ENCODE measurements at regions of chr6 and their contacts with region 1.

Region 1: DNA sequence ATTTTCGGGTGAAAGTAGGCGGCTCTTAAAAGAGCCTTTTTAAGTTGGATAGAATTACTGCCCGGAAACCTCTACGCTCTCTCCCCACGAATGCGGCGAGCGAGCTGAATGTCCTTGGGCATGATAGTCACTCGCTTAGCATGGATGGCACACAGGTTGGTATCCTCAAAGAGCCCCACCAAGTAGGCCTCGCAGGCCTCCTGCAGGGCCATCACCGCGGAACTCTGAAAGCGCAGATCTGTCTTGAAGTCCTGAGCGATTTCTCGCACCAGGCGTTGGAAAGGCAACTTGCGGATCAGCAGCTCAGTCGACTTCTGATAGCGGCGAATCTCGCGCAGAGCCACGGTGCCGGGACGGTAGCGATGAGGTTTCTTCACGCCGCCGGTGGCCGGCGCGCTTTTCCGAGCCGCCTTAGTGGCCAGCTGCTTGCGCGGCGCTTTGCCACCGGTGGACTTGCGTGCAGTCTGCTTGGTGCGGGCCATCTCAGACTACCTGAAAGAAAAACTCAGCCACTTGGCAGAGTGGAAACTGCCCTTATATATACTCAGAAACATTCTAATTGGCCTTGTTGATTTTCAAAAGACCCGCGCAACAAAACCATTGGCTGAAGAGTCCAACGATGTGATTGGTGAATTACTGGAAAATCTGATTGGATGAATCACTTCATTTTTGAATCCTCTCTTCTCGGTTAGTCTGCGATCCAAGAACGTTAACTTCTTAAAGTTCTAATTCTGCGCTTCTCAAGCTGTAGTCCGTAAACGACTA is 93.9 kb upstream of the BTN3A2 start:
- DNase-seq: peak; percentile 91
- H3K4me3 Mint-ChIP-seq: no peak overlapping the region
- H3K27ac Mint-ChIP-seq: no peak overlapping the region
- H3K4me1 Mint-ChIP-seq: peaks cover 32% of the 10 kb centered on the region
- H3K27me3 Mint-ChIP-seq: no peaks in the 10 kb centered on the region

Region 2: DNA sequence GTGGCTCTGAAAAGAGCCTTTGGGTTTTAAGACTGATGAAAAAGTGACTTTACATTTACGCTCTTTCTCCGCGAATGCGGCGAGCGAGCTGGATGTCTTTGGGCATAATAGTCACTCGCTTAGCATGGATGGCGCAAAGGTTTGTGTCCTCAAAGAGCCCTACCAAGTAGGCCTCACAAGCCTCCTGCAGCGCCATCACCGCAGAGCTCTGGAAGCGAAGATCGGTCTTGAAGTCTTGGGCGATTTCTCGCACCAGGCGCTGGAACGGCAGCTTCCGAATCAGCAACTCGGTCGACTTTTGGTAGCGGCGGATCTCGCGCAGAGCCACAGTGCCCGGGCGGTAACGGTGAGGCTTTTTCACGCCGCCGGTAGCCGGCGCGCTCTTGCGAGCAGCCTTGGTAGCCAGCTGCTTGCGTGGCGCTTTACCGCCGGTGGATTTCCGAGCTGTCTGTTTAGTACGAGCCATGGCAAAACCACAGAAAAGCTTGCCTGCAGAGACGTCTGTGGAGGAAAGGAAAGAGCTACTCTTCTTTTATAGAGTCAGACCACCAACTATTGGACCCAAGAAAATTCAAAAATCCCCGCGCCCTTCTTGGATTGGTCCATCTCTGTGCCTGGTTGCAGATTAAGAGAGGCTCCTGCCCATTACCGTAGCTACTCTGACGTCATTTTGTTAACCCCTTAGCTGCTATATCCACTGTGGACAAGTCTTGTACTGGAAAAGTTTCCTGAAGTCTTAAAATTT is 239.3 kb before region 1 on chr6:
- CTCF ChIA-PET with region 1: no interaction called
- POLR2A ChIA-PET with region 1: interaction called, 12 read pairs
- DNase-seq: peak; percentile 96
- H3K4me3 Mint-ChIP-seq: peak overlapping the region; percentile 96
- H3K27ac Mint-ChIP-seq: peak overlapping the region; percentile 100
- H3K4me1 Mint-ChIP-seq: peaks cover 79% of the 10 kb centered on the region
- H3K27me3 Mint-ChIP-seq: peaks cover 3% of the 10 kb centered on the region

Region 3: GRCh38 chr6:26175428-26176181 is 95.5 kb before region 1 on chr6:
- CTCF ChIA-PET with region 1: no interaction called
- POLR2A ChIA-PET with region 1: interaction called, 11 read pairs
- DNase-seq: peak; percentile 81
- H3K4me3 Mint-ChIP-seq: peak overlapping the region; percentile 54
- H3K27ac Mint-ChIP-seq: peak overlapping the region; percentile 75
- H3K4me1 Mint-ChIP-seq: peaks cover 50% of the 10 kb centered on the region
- H3K27me3 Mint-ChIP-seq: no peaks in the 10 kb centered on the region

Region 4: DNA sequence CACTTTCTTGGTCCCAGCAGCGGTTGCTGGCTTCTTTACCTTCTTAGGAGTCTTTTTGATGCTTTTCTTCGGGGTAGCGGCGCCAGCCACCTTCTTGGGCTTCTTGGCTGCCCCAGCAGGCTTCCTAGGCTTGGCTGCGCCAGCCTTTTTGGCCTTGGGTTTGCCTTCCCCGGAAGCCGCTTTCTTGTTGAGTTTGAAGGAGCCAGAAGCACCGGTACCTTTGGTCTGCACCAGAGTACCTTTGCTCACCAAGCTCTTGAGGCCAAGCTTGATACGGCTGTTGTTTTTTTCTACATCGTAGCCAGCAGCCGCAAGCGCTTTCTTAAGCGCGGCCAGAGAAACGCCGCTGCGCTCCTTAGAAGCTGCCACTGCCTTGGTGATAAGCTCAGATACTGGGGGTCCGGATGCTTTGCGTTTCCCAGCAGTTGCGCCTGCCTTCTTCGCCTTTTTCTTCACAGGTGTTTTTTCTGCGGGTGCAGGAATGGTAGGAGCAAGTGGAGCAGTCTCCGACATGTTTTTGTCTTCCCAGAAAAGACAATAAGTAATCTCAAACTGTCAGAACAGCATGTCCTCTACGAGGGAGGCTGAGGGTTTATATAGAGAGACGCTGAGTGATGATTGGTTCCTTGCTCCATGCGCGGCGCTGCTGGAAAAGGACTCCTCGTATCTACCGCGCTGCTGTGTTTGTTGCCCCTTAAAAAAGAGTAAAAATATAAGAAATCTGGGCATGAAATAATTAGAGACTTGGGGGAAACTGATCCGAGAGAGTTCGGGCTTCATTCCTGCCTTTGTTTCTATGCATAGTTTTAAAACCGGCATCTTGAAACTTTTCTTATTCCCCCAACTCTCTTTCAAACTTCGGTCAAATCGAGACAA is 36.4 kb before region 1 on chr6:
- CTCF ChIA-PET with region 1: interaction called, 4 read pairs
- POLR2A ChIA-PET with region 1: interaction called, 40 read pairs
- DNase-seq: peak; percentile 86
- H3K4me3 Mint-ChIP-seq: peak overlapping the region; percentile 85
- H3K27ac Mint-ChIP-seq: peak overlapping the region; percentile 100
- H3K4me1 Mint-ChIP-seq: peaks cover 54% of the 10 kb centered on the region
- H3K27me3 Mint-ChIP-seq: no peaks in the 10 kb centered on the region

Region 5: DNA sequence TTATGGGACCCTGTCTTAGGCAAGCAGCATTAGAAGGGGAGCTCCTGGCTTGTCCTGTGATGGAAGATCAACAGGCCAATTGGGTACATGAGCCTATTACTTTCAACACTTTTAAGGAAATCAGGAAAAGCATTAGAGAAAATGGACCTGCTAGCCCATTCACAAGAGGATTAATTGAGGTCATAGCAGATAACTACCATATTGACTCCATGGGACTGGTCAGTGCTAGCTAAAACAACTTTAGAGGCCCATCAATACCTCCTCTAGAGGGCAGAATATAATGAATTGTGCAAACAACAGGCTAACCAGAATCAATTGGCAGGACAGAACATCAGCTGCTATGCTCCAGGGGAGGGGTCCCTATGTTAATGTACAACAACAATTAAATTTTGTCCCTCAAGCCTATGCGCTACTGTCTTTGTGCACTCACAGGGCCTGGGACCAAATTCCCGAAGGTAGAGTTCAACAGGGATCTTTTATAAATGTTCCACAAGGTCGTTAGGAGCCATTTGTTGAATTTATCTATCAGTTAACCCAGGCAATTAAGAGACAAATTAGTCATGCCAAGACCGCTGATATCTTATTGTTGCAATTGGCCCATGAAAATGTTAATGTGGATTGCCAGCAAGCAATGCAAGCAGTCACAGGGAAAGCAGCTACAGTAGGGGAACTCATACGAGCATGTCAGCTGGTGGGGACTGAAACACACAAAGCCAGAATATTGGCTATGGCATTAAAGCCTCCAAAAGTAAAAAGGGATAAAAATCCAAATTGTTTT is 12.7 kb before region 1 on chr6:
- CTCF ChIA-PET with region 1: interaction called, 13 read pairs
- POLR2A ChIA-PET with region 1: interaction called, 4 read pairs
- DNase-seq: no peak
- H3K4me3 Mint-ChIP-seq: no peak overlapping the region
- H3K27ac Mint-ChIP-seq: no peak overlapping the region
- H3K4me1 Mint-ChIP-seq: peaks cover 22% of the 10 kb centered on the region
- H3K27me3 Mint-ChIP-seq: no peaks in the 10 kb centered on the region

Region 6: DNA sequence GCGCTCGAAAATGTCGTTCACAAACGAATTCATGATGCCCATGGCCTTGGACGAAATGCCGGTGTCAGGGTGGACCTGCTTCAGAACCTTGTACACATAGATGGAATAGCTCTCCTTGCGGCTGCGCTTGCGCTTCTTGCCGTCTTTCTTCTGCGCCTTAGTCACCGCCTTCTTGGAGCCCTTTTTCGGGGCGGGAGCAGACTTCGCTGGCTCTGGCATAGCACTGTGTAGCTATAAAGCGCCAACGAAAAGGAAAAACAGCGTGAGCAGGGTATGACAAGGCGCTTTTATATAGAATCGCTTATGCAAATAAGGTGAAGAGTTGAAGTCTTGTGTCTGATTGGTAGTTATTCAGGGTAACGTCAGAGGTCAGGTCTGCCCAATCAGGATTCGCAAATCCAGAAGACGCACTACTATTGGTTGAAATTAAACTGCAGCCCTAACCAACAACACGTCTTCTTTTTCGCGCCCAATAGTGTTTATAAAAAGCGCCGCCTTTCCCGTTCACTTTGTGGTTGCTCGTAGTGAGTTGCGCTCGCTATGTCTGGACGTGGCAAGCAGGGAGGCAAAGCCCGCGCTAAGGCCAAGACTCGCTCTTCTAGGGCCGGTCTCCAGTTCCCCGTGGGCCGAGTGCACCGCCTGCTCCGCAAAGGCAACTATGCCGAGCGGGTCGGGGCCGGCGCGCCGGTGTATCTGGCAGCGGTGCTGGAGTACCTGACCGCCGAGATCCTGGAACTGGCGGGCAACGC is 861.6 kb after region 1 on chr6:
- CTCF ChIA-PET with region 1: no interaction called
- POLR2A ChIA-PET with region 1: interaction called, 14 read pairs
- DNase-seq: peak; percentile 94
- H3K4me3 Mint-ChIP-seq: no peak overlapping the region
- H3K27ac Mint-ChIP-seq: no peak overlapping the region
- H3K4me1 Mint-ChIP-seq: peaks cover 66% of the 10 kb centered on the region
- H3K27me3 Mint-ChIP-seq: no peaks in the 10 kb centered on the region

Measured in activated CD4-positive, alpha-beta T cell treated with anti-CD3 and anti-CD28 coated beads, Interleukin-2, amount 10 ng/mL, durations not matched to agents 7 days and 5 days (primary cell).